ENCODE measurements at regions of chr1 and their contacts with region 1.

Region 1: GRCh38 chr1:16366722-16367257 is at the start of gene SZRD1:
- DNase-seq: peak; percentile 99
- ATAC-seq: peak; percentile 93
- H3K4me3 ChIP-seq: peak within 1 kb of the TSS; percentile 84 to 96
- H3K27ac ChIP-seq: peak within 1 kb of the TSS; percentile 95
- H3K4me1 ChIP-seq: peaks cover 20% of the 10 kb centered on the region
- H3K27me3 ChIP-seq: no peaks in the 10 kb centered on the region
- CTCF ChIP-seq: no peak
- total RNA-seq, gene SZRD1: 175 TPM

Region 2: DNA sequence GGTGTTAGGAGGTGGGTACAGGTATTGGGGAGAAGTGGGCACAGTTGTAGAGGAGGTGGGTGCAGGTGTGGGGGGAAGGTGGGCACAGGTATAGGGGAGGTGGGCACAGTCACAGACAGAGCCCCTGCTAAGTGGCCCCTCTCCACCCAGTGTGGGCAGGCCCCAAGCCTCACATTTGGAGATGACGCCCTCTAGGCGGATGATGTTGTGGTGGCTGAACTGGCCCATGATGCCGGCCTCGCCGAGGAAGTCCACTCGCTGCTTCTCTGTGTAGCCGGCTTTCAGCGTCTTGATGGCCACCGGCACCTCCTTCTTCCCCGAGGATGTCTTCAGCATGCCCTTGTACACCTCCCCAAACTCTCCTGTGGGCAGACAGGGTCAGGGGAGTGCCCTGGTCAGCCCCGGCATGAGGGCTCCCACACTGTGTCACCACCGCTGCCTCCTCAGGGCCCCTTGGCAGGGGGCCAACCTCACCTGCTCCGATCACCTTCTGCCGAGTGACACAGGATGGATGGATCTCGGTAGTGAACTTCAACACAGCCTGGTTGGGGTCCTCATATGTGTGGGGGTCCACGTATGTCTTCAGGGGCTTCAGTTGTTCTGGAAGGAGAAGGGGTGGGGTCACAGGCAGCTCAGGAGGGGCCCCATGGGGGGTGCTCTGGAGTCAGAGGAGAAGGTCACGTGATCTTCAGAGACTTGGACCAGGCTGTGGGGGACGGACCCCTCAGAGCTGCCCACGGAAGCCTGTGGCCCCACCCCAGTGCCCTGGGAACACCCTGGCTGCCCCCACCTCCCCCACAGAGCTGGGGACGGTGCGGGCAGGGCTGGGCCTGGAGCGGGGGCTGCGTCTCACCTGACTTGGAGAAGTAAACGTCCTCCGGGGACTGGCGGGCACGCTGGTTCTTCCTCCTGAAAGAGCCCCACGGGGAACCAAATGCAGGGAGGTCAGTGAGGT is 233.5 kb before region 1 on chr1:
- CTCF ChIA-PET with region 1: no interaction called
- POLR2A ChIA-PET with region 1: no interaction called
- in situ Hi-C with region 1: no loop called
- intact Hi-C with region 1: no loop called
- DNase-seq: no peak
- ATAC-seq: peak; percentile 52
- H3K4me3 ChIP-seq: no peak overlapping the region
- H3K27ac ChIP-seq: peak overlapping the region; percentile 75
- H3K4me1 ChIP-seq: peaks cover 77% of the 10 kb centered on the region
- H3K27me3 ChIP-seq: no peaks in the 10 kb centered on the region
- CTCF ChIP-seq: no peak

Region 3: DNA sequence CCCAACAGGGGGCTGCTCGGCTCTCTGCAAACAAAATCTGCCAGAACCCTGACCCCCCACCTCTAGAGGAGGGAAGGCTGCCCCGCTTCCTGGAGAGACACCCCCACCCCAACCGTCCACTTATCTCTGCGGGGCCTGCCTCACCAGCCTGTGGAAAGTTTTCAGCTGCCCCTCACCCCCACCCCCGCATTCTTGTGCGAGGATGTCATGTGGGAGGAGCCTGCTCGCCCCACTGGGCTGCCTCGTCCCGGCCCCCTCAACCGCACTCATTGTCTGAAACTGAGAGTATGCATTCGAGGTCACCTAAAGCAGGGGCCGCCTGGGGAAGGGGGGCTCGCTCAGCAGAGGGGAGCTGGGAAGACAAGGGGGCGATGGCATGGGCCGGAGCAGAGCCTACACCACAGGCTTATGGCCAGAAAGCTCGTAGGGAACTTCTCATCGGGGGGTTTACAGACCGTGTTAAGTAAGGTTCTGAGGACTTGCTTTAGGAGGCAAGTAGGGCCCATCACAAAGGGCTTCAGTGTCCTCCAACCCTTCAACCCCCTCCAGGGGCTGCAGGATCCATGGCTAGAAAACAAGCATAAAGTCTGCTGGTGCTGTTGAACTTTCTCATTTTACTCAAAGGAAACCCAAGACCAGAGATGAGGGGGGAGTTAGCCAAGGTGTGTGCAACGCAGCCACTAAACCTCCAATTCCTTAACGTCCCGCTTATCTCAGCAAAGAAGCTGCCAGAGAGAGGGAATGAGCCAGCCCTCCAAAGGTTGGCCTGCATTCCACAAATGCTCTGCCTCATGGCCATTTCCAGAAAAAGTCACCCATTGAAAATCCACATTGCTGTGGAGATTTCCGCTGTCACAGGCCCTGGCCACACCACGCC is 220.3 kb before region 1 on chr1:
- CTCF ChIA-PET with region 1: interaction called, 14 read pairs
- POLR2A ChIA-PET with region 1: no interaction called
- in situ Hi-C with region 1: no loop called
- intact Hi-C with region 1: no loop called
- DNase-seq: no peak
- ATAC-seq: peak; percentile 43
- H3K4me3 ChIP-seq: peak overlapping the region; percentile 26 to 48
- H3K27ac ChIP-seq: peak overlapping the region; percentile 100
- H3K4me1 ChIP-seq: peaks cover 92% of the 10 kb centered on the region
- H3K27me3 ChIP-seq: no peaks in the 10 kb centered on the region
- CTCF ChIP-seq: no peak

Region 4: DNA sequence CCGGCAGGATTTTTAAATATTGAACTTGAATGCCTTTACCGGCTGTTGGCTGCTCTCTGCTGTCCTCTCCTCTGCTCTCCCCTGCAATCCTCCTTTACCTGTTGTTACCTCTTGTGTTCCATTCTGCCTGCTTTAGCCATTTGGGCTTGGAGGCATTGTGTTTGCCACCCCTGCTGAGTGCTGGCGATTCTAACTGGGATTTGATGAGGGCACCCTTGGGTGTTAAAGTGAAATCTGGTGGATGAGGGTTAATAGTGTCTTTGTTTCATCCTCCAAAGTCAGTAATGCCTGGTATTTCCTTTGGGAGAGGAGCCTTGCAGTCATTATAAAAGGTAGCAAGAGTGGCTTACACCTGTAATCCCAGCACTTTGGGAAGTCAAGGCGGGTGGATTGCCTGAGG is 10.2 kb after region 1 on chr1:
- CTCF ChIA-PET with region 1: interaction called, 11 read pairs
- POLR2A ChIA-PET with region 1: no interaction called
- in situ Hi-C with region 1: no loop called
- intact Hi-C with region 1: no loop called
- DNase-seq: no peak
- ATAC-seq: no peak
- H3K4me3 ChIP-seq: no peak overlapping the region
- H3K27ac ChIP-seq: peak overlapping the region; percentile 80
- H3K4me1 ChIP-seq: peaks cover 66% of the 10 kb centered on the region
- H3K27me3 ChIP-seq: no peaks in the 10 kb centered on the region
- CTCF ChIP-seq: no peak